Heart left ventricle (tissue), 16 donors: ENCODE measurements at regions of chr2 and their contacts with region 1.

Region 1: DNA sequence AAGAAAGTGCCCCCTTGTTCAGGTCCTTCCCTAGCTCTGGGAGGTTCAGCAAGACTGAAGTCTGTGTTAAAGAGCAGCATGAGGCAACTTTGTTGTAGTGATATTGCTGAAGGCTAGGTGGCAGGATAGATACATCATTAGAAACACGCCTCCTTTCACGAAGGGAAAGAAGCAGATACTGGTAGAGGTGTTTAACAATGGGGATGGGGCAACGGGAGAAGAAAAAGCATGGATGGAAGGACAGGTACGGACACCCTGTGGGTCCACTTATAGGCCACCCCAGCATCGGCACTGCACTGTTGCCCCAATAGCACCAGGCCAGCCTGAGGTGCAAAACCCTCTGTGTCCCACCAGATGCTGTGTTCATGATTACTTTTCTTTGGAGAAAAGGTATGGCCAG is 3.5 kb upstream of the IGFBP5 start:
- DNase-seq: peak in 1 of 5 donors; percentile 41
- ATAC-seq: peak; percentile 16 to 64 (median 55)
- H3K4me3 ChIP-seq: no peak overlapping the region
- H3K27ac ChIP-seq: peak overlapping the region in 8 of 12 donors; percentile 5 to 88 (median 30)
- H3K4me1 ChIP-seq: peaks cover 0 to 69% (median 30%) of the 10 kb centered on the region in 12 donors
- H3K27me3 ChIP-seq: peaks cover 0 to 37% (median 0%) of the 10 kb centered on the region in 9 donors
- CTCF ChIP-seq: peak; percentile 48 to 84 (median 71)
- POLR2A ChIP-seq: no peak

Region 2: DNA sequence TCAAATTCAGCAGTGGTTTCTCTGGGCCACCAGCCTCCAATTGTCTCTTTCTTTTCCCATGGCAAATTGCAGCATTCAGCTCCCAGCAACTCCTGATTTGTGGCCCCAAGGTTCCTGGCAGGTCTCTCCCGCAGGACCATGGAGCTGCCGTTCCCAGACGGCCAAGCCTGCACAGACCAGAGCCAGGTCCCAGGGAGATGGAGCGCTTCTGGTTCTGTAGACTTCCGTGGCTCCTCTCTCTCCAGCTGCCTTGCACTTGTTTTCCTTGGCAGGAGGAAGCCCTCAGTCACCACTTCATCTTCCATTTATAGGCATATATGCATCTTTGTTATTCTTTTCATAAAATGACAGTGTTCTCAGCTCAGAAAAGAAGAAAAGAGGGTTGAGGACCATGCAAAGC is 139.3 kb after region 1 on chr2:
- intact Hi-C with region 1: loop called in 2 of 10 experiments (anchors 5 to 10 kb)
- DNase-seq: peak; percentile 41 to 75 (median 58)
- ATAC-seq: peak; percentile 59 to 73 (median 67)
- H3K4me3 ChIP-seq: no peak overlapping the region
- H3K27ac ChIP-seq: peak overlapping the region in 6 of 12 donors; percentile 2 to 59 (median 45)
- H3K4me1 ChIP-seq: peaks cover 0 to 31% (median 12%) of the 10 kb centered on the region in 12 donors
- H3K27me3 ChIP-seq: no peaks in the 10 kb centered on the region
- CTCF ChIP-seq: no peak
- POLR2A ChIP-seq: no peak

Region 3: DNA sequence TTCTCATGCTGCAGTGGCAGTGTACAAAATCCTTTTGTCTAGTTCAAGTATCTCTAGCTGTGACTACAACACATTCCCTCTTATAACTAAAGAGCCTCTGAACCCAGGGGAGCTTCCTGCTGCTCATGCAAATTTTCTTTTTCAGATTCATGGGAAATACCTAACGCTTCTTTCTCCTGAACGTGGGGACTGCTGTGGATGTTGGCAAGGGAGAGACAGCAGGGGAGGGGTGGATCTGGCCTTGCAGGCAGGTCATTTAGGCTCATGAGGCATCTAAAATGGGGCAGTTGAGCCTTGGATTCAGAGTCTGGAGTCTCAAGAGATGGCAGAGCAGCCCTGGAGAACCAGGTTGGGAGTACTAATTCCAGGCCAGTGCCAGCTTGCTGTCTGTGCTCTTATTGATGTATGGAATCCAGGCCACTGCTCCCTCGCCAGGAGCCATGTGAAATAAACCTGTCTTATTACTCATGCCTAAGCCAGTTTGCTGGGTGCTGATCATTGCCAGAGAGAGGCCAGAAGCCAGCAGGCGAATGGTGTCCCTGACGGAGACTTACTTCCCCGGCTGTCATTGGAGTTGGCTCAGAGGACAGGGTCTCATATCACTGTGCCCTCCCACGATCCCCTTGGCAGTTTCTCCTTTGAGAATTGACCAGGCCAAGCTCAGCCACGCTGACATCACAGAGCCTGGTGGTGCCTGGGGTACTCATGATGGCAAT is 190.2 kb after region 1 on chr2:
- intact Hi-C with region 1: loop called in 1 of 10 experiments (anchors 2 kb)
- DNase-seq: peak in 4 of 5 donors; percentile 35 to 73 (median 50)
- ATAC-seq: peak; percentile 32 to 89 (median 84)
- H3K4me3 ChIP-seq: no peak overlapping the region
- H3K27ac ChIP-seq: peak overlapping the region in 7 of 12 donors; percentile 7 to 44 (median 22)
- H3K4me1 ChIP-seq: peaks cover 0 to 13% (median 1%) of the 10 kb centered on the region in 12 donors
- H3K27me3 ChIP-seq: no peaks in the 10 kb centered on the region
- CTCF ChIP-seq: no peak
- POLR2A ChIP-seq: no peak

Region 4: DNA sequence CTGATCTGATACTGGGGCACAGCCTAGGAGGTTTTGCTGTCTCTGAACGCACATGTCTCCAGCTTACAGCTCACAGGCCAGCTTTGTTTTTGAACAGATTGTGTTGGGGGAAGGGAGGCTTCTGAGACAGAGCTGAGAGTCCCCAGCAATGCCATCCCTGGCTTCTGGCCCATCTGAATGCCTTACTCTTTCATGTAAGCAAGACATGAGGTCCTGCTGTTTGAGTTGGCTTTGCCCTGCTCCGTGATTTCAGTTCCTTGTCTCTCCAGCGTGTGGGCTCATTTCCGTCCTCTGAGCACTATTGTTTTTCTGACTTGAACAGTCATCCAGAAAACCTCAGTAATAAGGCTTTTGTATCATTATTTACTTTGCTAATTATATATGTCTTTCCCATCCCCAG is 355.9 kb after region 1 on chr2:
- intact Hi-C with region 1: loop called in 5 of 10 experiments (anchors 5 to 10 kb)
- DNase-seq: peak in 1 of 5 donors; percentile 40
- ATAC-seq: peak in 3 of 4 donors; percentile 12 to 50 (median 17)
- H3K4me3 ChIP-seq: no peak overlapping the region
- H3K27ac ChIP-seq: peak overlapping the region in 6 of 12 donors; percentile 8 to 55 (median 38)
- H3K4me1 ChIP-seq: peaks cover 0 to 48% (median 24%) of the 10 kb centered on the region in 12 donors
- H3K27me3 ChIP-seq: no peaks in the 10 kb centered on the region
- CTCF ChIP-seq: no peak
- POLR2A ChIP-seq: no peak

Region 5: DNA sequence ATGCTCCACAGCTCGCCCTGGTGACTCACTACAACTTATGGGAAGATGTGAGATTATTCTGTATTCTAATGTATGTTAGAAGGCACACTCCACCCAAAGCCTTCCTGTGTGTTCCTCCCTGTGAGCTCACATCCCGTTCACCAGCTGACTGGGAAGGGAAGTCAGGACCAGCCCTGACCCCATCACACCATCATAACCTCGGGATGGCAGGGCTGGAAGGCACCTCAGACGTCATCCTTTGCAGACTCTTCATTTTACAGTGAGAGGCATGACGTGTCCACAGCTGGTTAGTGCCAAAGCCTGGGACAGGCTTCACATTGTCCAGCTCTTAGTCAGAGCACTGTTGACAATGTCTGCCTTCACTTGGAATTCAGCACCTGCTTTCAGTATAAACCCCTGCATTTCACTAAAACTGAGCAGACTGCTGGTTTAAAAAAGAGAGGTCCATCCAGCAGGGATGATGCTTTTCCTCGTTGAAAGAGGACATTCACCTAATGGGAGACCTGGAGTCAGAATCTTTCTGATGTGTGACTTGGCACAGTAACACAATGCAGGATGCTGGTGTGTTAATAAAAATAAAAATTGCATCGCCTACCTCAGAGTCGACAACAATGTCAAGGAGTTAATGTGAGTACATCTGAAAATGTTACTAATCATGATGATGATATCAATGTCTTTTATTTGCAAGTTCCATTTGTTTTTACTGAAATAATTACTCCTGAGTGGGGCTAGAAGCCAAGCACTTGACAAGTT is 578.9 kb after region 1 on chr2:
- intact Hi-C with region 1: loop called in 1 of 10 experiments (anchors 10 kb)
- DNase-seq: peak in 4 of 5 donors; percentile 12 to 75 (median 41)
- ATAC-seq: peak in 3 of 4 donors; percentile 78 to 84 (median 78)
- H3K4me3 ChIP-seq: no peak overlapping the region
- H3K27ac ChIP-seq: peak overlapping the region in 3 of 12 donors; percentile 29 to 57 (median 47)
- H3K4me1 ChIP-seq: peaks cover 0 to 48% (median 30%) of the 10 kb centered on the region in 12 donors
- H3K27me3 ChIP-seq: no peaks in the 10 kb centered on the region
- CTCF ChIP-seq: no peak
- POLR2A ChIP-seq: no peak

Region 6: GRCh38 chr2:217510771-217511291 is 811.9 kb after region 1 on chr2:
- intact Hi-C with region 1: loop called (anchors 1 to 5 kb)
- DNase-seq: peak in 4 of 5 donors; percentile 39 to 77 (median 62)
- ATAC-seq: peak; percentile 88 to 93 (median 91)
- H3K4me3 ChIP-seq: no peak overlapping the region
- H3K27ac ChIP-seq: peak overlapping the region in 2 of 12 donors; percentile 2 to 16
- H3K4me1 ChIP-seq: peaks cover 0 to 24% (median 5%) of the 10 kb centered on the region in 12 donors
- H3K27me3 ChIP-seq: no peaks in the 10 kb centered on the region
- CTCF ChIP-seq: peak; percentile 30 to 82 (median 72)
- POLR2A ChIP-seq: no peak